ENCODE measurements at regions of chr1 and their contacts with region 1.

Region 1: GRCh38 chr1:40385437-40386358 is 12.2 kb downstream of the SMAP2 start:
- DNase-seq: peak; percentile 38 to 93 (median 81)
- H3K4me3 ChIP-seq: peak overlapping the region; percentile 63
- H3K4me3 Mint-ChIP-seq: peak overlapping the region; percentile 72 to 90 (median 84)
- H3K27ac ChIP-seq: peak overlapping the region; percentile 95
- H3K27ac Mint-ChIP-seq: peak overlapping the region; percentile 90 to 100 (median 98)
- H3K4me1 ChIP-seq: peaks cover 89% of the 10 kb centered on the region
- H3K4me1 Mint-ChIP-seq: peaks cover 89 to 96% (median 95%) of the 10 kb centered on the region in 3 donors
- H3K27me3 ChIP-seq: no peaks in the 10 kb centered on the region
- H3K27me3 Mint-ChIP-seq: no peaks in the 10 kb centered on the region

Region 2: GRCh38 chr1:38973659-38974424 is 1411.9 kb before region 1 on chr1:
- CTCF ChIA-PET with region 1: no interaction called
- POLR2A ChIA-PET with region 1: interaction called, 10 read pairs
- DNase-seq: no peak
- H3K4me3 ChIP-seq: no peak overlapping the region
- H3K4me3 Mint-ChIP-seq: no peak overlapping the region
- H3K27ac ChIP-seq: no peak overlapping the region
- H3K27ac Mint-ChIP-seq: peak overlapping the region in 2 of 8 donors; percentile 56 to 64
- H3K4me1 ChIP-seq: peaks cover 5% of the 10 kb centered on the region
- H3K4me1 Mint-ChIP-seq: peaks cover 14 to 20% (median 17%) of the 10 kb centered on the region in 3 donors
- H3K27me3 ChIP-seq: no peaks in the 10 kb centered on the region
- H3K27me3 Mint-ChIP-seq: peaks cover 0 to 5% of the 10 kb centered on the region in 2 donors

Region 3: GRCh38 chr1:40315239-40315794 is 70.4 kb before region 1 on chr1:
- CTCF ChIA-PET with region 1: interaction called, 23 read pairs
- POLR2A ChIA-PET with region 1: interaction called, 5 read pairs
- DNase-seq: peak; percentile 72 to 88 (median 81)
- H3K4me3 ChIP-seq: peak overlapping the region; percentile 80
- H3K4me3 Mint-ChIP-seq: peak overlapping the region; percentile 84 to 93 (median 90)
- H3K27ac ChIP-seq: no peak overlapping the region
- H3K27ac Mint-ChIP-seq: peak overlapping the region in 5 of 8 donors; percentile 15 to 89 (median 84)
- H3K4me1 ChIP-seq: peaks cover 19% of the 10 kb centered on the region
- H3K4me1 Mint-ChIP-seq: peaks cover 13 to 41% (median 23%) of the 10 kb centered on the region in 3 donors
- H3K27me3 ChIP-seq: peaks cover 5% of the 10 kb centered on the region
- H3K27me3 Mint-ChIP-seq: peaks cover 8 to 18% of the 10 kb centered on the region in 2 donors

Region 4: DNA sequence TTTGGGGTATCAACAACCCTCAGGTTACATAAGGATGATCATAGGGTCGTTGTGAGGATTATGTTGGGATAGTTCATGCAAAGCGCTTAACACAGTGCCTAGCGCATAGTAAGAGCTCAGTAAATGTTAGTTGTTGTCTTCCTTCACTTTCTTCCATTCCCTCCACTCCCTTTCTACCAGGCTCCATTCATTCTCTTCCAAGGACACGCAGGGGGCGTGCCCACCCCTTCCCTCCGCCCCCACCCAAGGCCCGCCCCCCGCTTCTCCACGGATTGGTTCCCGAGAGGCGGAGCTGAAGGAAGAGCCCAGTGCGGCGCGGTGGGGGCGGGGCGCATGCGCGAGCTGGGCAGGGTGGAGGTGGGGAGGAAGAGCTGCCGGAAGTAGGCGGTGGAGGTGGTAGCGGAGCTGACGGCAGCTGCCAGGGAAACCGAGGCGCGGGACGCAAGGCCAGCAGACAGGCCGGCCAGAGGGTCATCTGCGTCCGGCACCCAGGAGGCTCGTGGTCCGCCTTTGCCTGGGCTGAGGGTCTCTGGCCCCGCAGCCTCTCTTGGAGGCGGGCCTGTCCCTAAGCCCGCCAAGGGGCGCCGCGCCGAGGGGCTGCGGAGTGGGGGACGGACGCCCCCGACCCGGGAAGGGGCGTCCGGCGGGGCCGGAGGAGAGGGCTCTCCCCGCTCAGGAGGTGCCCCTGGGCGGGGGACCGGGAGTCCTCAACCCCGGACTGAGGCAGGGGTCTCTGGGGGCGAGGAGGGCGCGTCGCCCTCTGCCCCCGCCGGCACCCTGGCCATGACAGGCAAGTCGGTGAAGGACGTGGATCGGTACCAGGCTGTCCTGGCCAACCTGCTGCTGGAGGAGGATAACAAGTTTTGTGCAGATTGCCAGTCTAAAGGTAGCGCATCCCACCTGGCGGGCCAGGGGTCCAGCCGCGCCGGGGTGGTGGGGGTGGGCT is 12.1 kb before region 1 on chr1 and contains the start of gene SMAP2:
- CTCF ChIA-PET with region 1: interaction called, 46 read pairs
- POLR2A ChIA-PET with region 1: interaction called, 86 read pairs
- DNase-seq: peak; percentile 93 to 97 (median 96)
- H3K4me3 ChIP-seq: peak within 1 kb of the TSS; percentile 91
- H3K4me3 Mint-ChIP-seq: peak within 1 kb of the TSS; percentile 96 to 100 (median 99)
- H3K27ac ChIP-seq: peak within 1 kb of the TSS; percentile 97
- H3K27ac Mint-ChIP-seq: peak within 1 kb of the TSS; percentile 95 to 100 (median 98)
- H3K4me1 ChIP-seq: peaks cover 43% of the 10 kb centered on the region
- H3K4me1 Mint-ChIP-seq: peaks cover 47 to 60% (median 56%) of the 10 kb centered on the region in 3 donors
- H3K27me3 ChIP-seq: no peaks in the 10 kb centered on the region
- H3K27me3 Mint-ChIP-seq: peaks cover 0 to 9% of the 10 kb centered on the region in 2 donors
- total RNA-seq, gene SMAP2: 144 to 146 TPM